Activated CD4-positive, alpha-beta T cell treated with anti-CD3 and anti-CD28 coated beads, Interleukin-2, amount 10 ng/mL, durations not matched to agents 24 days and 14 days (primary cell): ENCODE measurements at regions of chr7 and their contacts with region 1.

Region 1: GRCh38 chr7:37408291-37409228 is 40.1 kb downstream of the ELMO1 start:
- DNase-seq: peak; percentile 77
- H3K4me3 Mint-ChIP-seq: peak overlapping the region; percentile 81
- H3K27ac Mint-ChIP-seq: peak overlapping the region; percentile 91
- H3K4me1 Mint-ChIP-seq: peaks cover 56% of the 10 kb centered on the region
- H3K27me3 Mint-ChIP-seq: no peaks in the 10 kb centered on the region

Region 2: GRCh38 chr7:37342688-37343471 is 65.7 kb before region 1 on chr7:
- intact Hi-C with region 1: loop called (anchors 1 kb)
- DNase-seq: peak; percentile 89
- H3K4me3 Mint-ChIP-seq: peak overlapping the region; percentile 92
- H3K27ac Mint-ChIP-seq: peak overlapping the region; percentile 99
- H3K4me1 Mint-ChIP-seq: peaks cover 61% of the 10 kb centered on the region
- H3K27me3 Mint-ChIP-seq: no peaks in the 10 kb centered on the region

Region 3: GRCh38 chr7:37365405-37365804 is 43.2 kb before region 1 on chr7:
- intact Hi-C with region 1: loop called (anchors 1 kb)
- DNase-seq: peak; percentile 65
- H3K4me3 Mint-ChIP-seq: peak overlapping the region; percentile 1
- H3K27ac Mint-ChIP-seq: peak overlapping the region; percentile 9
- H3K4me1 Mint-ChIP-seq: peaks cover 39% of the 10 kb centered on the region
- H3K27me3 Mint-ChIP-seq: no peaks in the 10 kb centered on the region

Region 4: GRCh38 chr7:37395618-37396259 is 12.8 kb before region 1 on chr7:
- intact Hi-C with region 1: loop called (anchors 1 kb)
- DNase-seq: no peak
- H3K4me3 Mint-ChIP-seq: peak overlapping the region; percentile 32
- H3K27ac Mint-ChIP-seq: peak overlapping the region; percentile 70
- H3K4me1 Mint-ChIP-seq: peaks cover 29% of the 10 kb centered on the region
- H3K27me3 Mint-ChIP-seq: no peaks in the 10 kb centered on the region

Region 5: GRCh38 chr7:37440738-37441385 is 32.3 kb after region 1 on chr7:
- intact Hi-C with region 1: loop called (anchors 1 kb)
- DNase-seq: peak; percentile 80
- H3K4me3 Mint-ChIP-seq: peak overlapping the region; percentile 68
- H3K27ac Mint-ChIP-seq: peak overlapping the region; percentile 85
- H3K4me1 Mint-ChIP-seq: peaks cover 51% of the 10 kb centered on the region
- H3K27me3 Mint-ChIP-seq: no peaks in the 10 kb centered on the region